ENCODE measurements at regions of chr12 and their contacts with region 1.

Region 1: DNA sequence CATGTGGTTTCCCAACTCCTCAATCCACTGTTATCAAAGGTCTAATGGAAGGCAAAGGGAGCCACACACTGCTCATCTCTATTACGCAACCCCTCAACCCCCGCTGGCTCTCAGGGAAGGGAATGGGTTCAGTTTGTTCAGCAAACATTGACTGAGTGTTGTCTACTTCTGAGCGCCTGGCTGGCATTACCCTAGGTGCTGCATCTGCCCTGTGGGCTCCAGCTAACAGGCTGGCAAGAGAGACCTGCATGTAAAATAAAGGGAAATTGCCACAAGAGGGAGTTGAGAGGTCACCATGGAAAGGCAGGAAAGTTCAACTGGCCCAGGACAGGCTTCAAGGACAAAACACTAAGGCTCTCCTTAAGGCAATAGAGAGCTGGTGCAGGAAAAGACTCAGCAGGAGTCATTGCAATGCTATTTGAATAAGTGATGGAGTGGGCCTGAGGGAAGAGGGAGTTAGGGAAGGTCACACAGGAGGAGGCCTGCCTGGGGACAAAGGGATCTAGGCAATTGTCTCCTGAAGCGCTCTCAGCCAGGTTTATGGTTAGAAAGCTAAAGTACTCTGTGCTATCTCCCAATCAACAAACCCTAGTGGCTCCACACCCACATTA is 5.5 kb upstream of the ZNF740 start:
- DNase-seq: peak; percentile 72 to 94
- ATAC-seq: peak; percentile 88 to 91
- H3K4me3 ChIP-seq: no peak overlapping the region
- H3K27ac ChIP-seq: peak overlapping the region; percentile 79
- H3K4me1 ChIP-seq: peaks cover 70% of the 10 kb centered on the region
- CTCF ChIP-seq: peak; percentile 57
- EP300 ChIP-seq: peak in 1 of 2 experiments; percentile 57; a peak in 1 of 5 replicates
- POLR2A ChIP-seq: no peak
- RAD21 ChIP-seq: peak; percentile 67 to 69

Region 2: DNA sequence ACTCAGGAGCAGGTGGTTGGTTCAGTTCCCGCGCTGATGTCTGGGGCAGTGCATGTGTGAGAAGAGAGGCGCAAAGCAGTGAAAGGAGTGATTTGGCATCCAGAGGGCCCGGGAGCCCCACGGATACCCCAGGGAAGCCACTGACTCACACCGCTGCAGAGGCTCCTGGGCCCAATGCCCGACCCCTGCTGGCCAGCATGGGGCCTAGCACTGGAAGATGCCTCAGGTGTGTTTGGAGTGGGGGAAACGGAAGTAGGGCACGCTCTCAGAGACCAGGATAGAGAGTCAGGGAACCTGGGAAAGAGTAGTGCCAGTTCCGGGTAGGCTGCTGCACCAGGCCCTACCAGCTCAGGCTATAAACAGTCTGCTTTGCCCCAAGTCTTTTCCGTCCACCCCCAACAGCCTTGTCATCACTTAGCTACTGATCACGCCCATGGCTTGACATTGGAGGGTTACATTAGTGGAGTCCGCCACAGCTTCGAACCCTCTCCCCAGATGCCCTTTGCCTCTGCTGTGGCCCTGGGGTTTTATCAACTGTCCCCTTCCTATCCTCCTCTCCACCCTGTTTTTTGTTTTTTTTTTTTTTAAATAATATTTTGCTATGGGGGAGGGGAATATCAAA is 15.2 kb after region 1 on chr12:
- CTCF ChIA-PET with region 1: interaction called, 451 read pairs
- POLR2A ChIA-PET with region 1: interaction called, 33 read pairs
- DNase-seq: peak; percentile 73 to 87
- ATAC-seq: peak; percentile 87 to 90
- H3K4me3 ChIP-seq: no peak overlapping the region
- H3K27ac ChIP-seq: peak overlapping the region; percentile 33 to 44; a peak in 3 of 6 replicates
- H3K4me1 ChIP-seq: peaks cover 15% of the 10 kb centered on the region; the same call in 2 of the 3 replicates
- CTCF ChIP-seq: peak; percentile 78
- EP300 ChIP-seq: no peak
- POLR2A ChIP-seq: no peak
- RAD21 ChIP-seq: peak; percentile 65 to 66; a peak in 4 of 5 replicates

Measured in A549 (cell line).